ENCODE measurements at regions of chr2 and their contacts with region 1.

Region 1: DNA sequence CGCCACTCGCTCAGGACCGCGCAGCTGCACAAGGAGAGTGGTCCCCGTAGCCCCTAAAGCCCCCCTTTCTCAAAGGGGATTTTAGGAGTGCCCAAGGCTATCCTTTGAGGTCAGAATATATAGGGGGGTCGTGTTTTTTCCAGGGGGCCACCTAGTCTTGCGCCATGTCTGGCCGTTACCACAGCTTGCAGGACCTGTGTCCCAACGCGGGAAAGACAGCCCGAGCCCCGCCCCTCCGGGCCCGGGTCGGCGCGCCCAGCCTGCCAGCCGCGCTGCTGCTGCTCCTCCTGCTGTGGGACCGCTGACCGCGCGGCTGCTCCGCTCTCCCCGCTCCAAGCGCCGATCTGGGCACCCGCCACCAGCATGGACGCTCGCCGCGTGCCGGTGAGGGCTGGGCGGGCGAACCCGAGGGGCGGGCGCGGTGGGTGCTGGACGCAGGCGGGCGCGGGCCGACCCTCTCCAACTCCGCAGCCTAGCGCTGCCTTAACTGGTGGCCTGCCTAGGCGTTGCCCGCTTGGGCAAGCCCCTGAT is at the start of gene CDCA7:
- DNase-seq: peak; percentile 76
- H3K4me3 ChIP-seq: peak within 1 kb of the TSS; percentile 47 to 74 (median 64)
- H3K27ac ChIP-seq: peak within 1 kb of the TSS; percentile 56 to 85 (median 68)
- H3K4me1 ChIP-seq: peaks cover 0 to 33% (median 14%) of the 10 kb centered on the region in 4 donors
- H3K27me3 ChIP-seq: peaks cover 51% of the 10 kb centered on the region
- CTCF ChIP-seq: no peak
- EP300 ChIP-seq: no peak
- POLR2A ChIP-seq: peak; percentile 7
- total RNA-seq, gene CDCA7: 5.2 to 44.4 (median 11.8) TPM

Region 2: GRCh38 chr2:173305303-173305702 is 49.4 kb before region 1 on chr2:
- in situ Hi-C with region 1: no loop called
- intact Hi-C with region 1: loop called (anchors 1 kb)
- DNase-seq: no peak
- H3K4me3 ChIP-seq: no peak overlapping the region
- H3K27ac ChIP-seq: no peak overlapping the region
- H3K4me1 ChIP-seq: no peaks in the 10 kb centered on the region
- H3K27me3 ChIP-seq: no peaks in the 10 kb centered on the region
- CTCF ChIP-seq: no peak
- EP300 ChIP-seq: no peak
- POLR2A ChIP-seq: no peak

Measured in transverse colon (tissue), 4 donors.